ENCODE measurements at regions of chr16 and their contacts with region 1.

Region 1: GRCh38 chr16:10971560-10971961 is 27.2 kb downstream of the CLEC16A start:
- DNase-seq: peak; percentile 67
- H3K4me3 Mint-ChIP-seq: no peak overlapping the region
- H3K27ac Mint-ChIP-seq: peak overlapping the region; percentile 79
- H3K4me1 Mint-ChIP-seq: peaks cover 79% of the 10 kb centered on the region
- H3K27me3 Mint-ChIP-seq: no peaks in the 10 kb centered on the region

Region 2: GRCh38 chr16:10929853-10930754 is 41.5 kb before region 1 on chr16:
- CTCF ChIA-PET with region 1: no interaction called
- POLR2A ChIA-PET with region 1: no interaction called
- DNase-seq: no peak
- H3K4me3 Mint-ChIP-seq: no peak overlapping the region
- H3K27ac Mint-ChIP-seq: peak overlapping the region; percentile 38
- H3K4me1 Mint-ChIP-seq: peaks cover 27% of the 10 kb centered on the region
- H3K27me3 Mint-ChIP-seq: no peaks in the 10 kb centered on the region

Region 3: GRCh38 chr16:10981697-10982216 is 10.2 kb after region 1 on chr16:
- CTCF ChIA-PET with region 1: interaction called, 11 read pairs
- POLR2A ChIA-PET with region 1: no interaction called
- DNase-seq: peak; percentile 65
- H3K4me3 Mint-ChIP-seq: peak overlapping the region; percentile 26
- H3K27ac Mint-ChIP-seq: peak overlapping the region; percentile 68
- H3K4me1 Mint-ChIP-seq: peaks cover 87% of the 10 kb centered on the region
- H3K27me3 Mint-ChIP-seq: no peaks in the 10 kb centered on the region

Measured in activated CD4-positive, alpha-beta T cell treated with anti-CD3 and anti-CD28 coated beads, Interleukin-2, amount 10 ng/mL, durations not matched to agents 7 days and 5 days (primary cell).